ENCODE measurements at regions of chr6 and their contacts with region 1.

Region 1: DNA sequence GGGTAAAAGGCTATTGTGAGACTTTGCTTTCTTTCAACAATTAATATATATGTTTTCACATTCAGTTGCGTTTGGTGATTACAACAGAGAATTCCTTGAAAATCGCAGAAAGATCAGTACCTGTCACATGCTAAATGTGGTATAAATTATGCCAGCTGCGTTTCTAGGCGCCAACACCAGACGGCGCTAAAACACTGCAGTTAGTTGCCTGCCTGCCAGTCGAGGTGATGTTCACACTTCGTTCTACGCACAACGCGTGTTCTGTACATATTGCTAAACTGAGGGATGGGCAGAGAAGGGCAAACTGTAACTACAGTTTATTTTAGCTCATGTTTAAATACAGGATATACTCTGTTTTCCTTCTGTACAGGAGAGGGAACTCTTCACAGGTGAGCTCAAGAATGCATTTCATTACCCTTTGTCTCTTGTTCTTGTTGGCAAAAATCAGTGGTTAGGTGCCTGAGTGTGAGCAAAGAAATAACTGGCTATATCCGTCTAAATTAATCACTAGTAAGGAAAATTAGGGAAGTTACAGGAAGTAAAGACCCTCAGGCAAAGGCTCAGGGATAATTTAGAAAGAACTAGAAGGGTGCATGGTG is 100.1 kb upstream of the RGS17 start:
- ATAC-seq: peak; percentile 47 to 79 (median 55)
- H3K4me3 ChIP-seq: no peak overlapping the region
- H3K27ac ChIP-seq: no peak overlapping the region
- H3K4me1 ChIP-seq: no peaks in the 10 kb centered on the region

Region 2: DNA sequence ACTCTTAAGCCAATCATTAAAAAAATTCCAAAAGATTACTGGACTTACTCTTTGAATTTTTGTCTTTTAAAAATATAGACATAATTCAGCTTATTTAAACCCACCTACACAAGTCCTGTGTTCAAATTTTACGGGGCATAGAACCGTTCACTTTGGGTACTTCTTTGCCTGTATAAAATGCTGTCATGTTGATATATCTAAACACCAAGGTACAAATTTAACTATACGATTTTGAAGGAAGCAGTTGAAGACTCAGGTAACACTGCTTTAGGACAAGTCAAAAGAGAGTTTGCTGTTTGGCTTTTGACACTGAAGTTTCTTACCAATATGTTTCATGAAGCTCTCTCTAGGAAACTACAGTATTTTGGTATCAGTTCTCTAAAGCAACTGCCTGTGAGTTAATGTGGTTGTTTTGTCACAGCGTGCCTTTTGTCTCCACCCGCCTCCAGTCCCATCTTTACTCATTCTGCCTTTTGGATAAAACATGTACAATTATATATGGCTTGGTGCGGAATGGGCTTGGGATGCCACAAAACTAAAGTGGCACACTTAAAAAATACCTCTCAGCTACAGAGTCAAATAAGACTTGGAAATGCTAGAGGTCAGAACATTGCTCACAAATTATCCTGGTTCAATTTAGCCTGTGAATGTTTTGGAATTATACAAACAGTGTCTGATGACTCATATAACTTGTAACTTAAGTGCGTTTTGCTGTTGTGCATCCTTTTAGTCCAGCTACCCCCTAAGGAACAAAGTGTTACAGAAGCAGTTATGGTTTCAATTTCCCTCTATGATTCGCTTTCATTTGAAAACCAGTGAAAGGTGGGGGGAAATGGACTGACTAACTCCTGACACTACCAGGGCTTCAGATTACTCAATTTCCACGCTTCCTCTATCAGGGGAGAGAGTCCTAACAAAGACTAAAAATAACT is 138.8 kb before region 1 on chr6:
- in situ Hi-C with region 1: no loop called
- ATAC-seq: peak in 6 of 8 experiments; percentile 22 to 49 (median 31)
- H3K4me3 ChIP-seq: no peak overlapping the region
- H3K27ac ChIP-seq: no peak overlapping the region
- H3K4me1 ChIP-seq: no peaks in the 10 kb centered on the region

Region 3: DNA sequence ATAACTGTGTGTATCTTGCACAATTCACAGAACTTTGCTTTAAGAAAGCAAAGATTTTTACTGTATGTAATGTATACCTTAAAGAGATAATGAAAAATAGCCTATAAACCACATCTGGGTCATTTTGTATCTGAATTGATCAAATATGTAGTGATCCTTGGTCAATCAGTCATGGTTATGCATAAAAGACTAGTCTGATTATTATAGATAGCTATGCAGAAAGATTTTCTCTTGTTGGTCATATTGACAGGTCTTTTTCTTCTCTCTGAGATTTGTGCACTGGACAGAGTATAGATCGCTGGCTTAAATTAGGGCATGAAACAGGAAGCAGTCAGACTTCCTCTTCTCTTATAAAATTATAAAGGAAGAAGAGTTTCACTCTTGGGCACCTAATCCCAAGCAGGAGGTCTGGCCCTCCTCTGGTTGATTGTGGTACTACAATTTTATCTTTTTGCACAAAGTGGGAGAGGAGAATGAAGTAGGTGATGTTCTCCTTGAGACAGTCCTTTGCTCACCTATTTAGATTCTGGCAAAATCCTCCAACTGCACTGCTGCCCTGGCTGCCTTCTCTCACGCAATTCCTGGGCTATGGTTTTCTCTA is 280.8 kb after region 1 on chr6:
- in situ Hi-C with region 1: loop called in 3 of 9 experiments (anchors 10 to 25 kb)
- ATAC-seq: peak in 3 of 8 experiments; percentile 67 to 77 (median 69)
- H3K4me3 ChIP-seq: no peak overlapping the region
- H3K27ac ChIP-seq: no peak overlapping the region
- H3K4me1 ChIP-seq: no peaks in the 10 kb centered on the region

Region 4: GRCh38 chr6:153957394-153957793 is 726.2 kb after region 1 on chr6:
- in situ Hi-C with region 1: loop called in 1 of 9 experiments (anchors 25 kb)
- ATAC-seq: peak in 2 of 8 experiments; percentile 75 to 77
- H3K4me3 ChIP-seq: no peak overlapping the region
- H3K27ac ChIP-seq: no peak overlapping the region
- H3K4me1 ChIP-seq: peaks cover 0 to 3% of the 10 kb centered on the region in 2 donors

Region 5: DNA sequence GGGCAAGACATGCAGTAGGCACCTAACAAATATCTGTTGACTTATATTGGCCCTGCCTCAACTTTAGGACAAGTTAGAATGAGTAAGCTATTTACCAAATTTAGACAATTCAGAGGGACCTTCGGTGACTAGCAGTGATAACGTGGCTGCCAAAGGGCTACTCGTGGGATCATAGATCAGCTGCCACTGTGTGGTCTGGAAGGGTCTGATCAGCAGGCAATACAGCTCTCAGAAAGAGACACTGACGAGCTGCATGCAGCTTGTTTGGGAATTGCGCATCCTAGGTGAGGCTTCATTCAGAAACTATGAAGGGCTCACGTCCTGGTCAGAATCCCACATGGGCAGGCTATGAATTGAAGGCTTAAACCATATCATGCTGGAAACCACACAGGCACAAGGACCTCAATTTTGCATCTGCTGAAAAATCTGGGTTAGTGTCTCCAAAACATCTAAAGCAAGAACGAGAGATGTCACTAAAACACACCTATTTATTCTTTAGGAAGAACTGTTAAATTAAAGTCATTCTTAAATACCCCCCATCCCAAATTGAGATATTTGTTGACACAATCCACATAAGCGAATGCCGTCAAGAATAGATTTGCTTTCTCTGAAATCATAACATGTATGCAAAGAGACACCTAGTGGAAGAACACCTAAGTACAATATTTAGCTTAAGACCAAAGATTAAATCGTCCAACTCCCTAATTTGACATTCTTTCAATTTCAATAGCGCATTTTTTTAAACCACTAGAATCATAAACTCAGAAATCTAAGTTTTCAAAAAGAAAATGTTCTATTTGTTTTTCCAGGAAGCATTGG is 1045.9 kb after region 1 on chr6:
- in situ Hi-C with region 1: loop called in 1 of 9 experiments (anchors 25 kb)
- ATAC-seq: peak in 4 of 8 experiments; percentile 24 to 67 (median 42)
- H3K4me3 ChIP-seq: no peak overlapping the region
- H3K27ac ChIP-seq: no peak overlapping the region
- H3K4me1 ChIP-seq: peaks cover 3 to 9% of the 10 kb centered on the region in 2 donors